Aorta (tissue), 5 donors: ENCODE measurements at regions of chr1 and their contacts with region 1.

Region 1: GRCh38 chr1:48718116-48718630 is 58.5 kb downstream of the BEND5 start:
- DNase-seq: no peak
- ATAC-seq: no peak
- H3K4me3 ChIP-seq: no peak overlapping the region
- H3K27ac ChIP-seq: no peak overlapping the region
- H3K4me1 ChIP-seq: no peaks in the 10 kb centered on the region
- H3K27me3 ChIP-seq: no peaks in the 10 kb centered on the region

Region 2: GRCh38 chr1:48109390-48110013 is 608.7 kb before region 1 on chr1:
- intact Hi-C with region 1: no loop called
- DNase-seq: no peak
- ATAC-seq: no peak
- H3K4me3 ChIP-seq: no peak overlapping the region
- H3K27ac ChIP-seq: no peak overlapping the region
- H3K4me1 ChIP-seq: no peaks in the 10 kb centered on the region
- H3K27me3 ChIP-seq: no peaks in the 10 kb centered on the region

Region 3: GRCh38 chr1:49424782-49425181 is 706.6 kb after region 1 on chr1:
- intact Hi-C with region 1: loop called in 1 of 2 experiments (anchors 10 kb)
- DNase-seq: no peak
- ATAC-seq: no peak
- H3K4me3 ChIP-seq: no peak overlapping the region
- H3K27ac ChIP-seq: no peak overlapping the region
- H3K4me1 ChIP-seq: no peaks in the 10 kb centered on the region
- H3K27me3 ChIP-seq: no peaks in the 10 kb centered on the region